Breast epithelium (tissue), 4 donors: ENCODE measurements at regions of chr4 and their contacts with region 1.

Region 1: GRCh38 chr4:118888666-118889311 is at the start of gene SYNPO2:
- DNase-seq: peak; percentile 69 to 88
- H3K4me3 ChIP-seq: peak within 1 kb of the TSS; percentile 38 to 70 (median 56)
- H3K27ac ChIP-seq: peak within 1 kb of the TSS; percentile 55 to 69
- H3K4me1 ChIP-seq: no peaks in the 10 kb centered on the region
- H3K27me3 ChIP-seq: no peaks in the 10 kb centered on the region
- CTCF ChIP-seq: no peak
- POLR2A ChIP-seq: peak; percentile 75
- total RNA-seq, gene SYNPO2: 30.2 to 90.1 (median 52.7) TPM

Region 2: DNA sequence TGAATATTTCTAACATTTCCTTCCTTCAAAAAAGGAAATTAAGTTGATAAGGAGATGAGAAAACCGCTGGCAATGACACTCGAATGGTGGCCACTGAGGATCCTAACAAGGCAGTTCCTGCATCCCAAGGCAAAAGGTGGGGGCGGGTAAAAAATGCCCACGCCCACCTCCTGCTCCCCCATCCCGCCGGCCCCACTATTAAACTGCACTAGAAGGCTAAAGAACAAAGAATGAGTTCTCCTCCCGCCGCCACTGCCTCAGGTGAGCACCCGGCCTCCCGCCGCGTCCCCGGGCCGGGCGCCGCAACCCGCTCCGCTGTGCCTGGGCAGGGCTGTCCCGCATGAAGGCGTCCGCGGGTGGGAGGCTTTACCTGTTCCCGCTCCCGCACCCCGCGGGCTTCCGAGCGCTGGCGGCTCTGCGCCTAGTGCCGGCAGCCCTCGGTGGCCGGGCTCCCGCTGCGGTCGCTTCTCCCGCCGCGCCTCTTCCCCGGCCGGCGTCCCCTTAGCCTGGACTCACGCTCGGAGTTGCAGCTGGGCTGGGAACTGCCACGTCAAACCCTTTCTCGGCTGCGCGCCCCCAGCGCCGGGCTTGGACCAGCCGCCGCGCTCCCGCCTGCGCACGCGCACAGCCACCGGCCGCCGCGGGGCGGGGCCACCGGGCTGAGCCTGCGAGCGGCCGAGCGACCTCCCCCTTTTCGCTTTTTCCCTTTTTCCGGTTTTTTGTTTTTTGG is 53.1 kb before region 1 on chr4 and contains the start of gene SEC24D:
- intact Hi-C with region 1: loop called (anchors 2 kb)
- DNase-seq: peak; percentile 73 to 77
- H3K4me3 ChIP-seq: peak within 1 kb of the TSS; percentile 96 to 99 (median 96)
- H3K27ac ChIP-seq: peak within 1 kb of the TSS; percentile 96 to 99
- H3K4me1 ChIP-seq: no peaks in the 10 kb centered on the region
- H3K27me3 ChIP-seq: no peaks in the 10 kb centered on the region
- CTCF ChIP-seq: peak in 1 of 3 donors; percentile 16
- POLR2A ChIP-seq: no peak
- total RNA-seq, gene SEC24D: 24.5 to 63.6 (median 50.8) TPM

Region 3: GRCh38 chr4:120156120-120156718 is 1267.4 kb after region 1 on chr4:
- intact Hi-C with region 1: no loop called
- DNase-seq: no peak
- H3K4me3 ChIP-seq: no peak overlapping the region
- H3K27ac ChIP-seq: no peak overlapping the region
- H3K4me1 ChIP-seq: no peaks in the 10 kb centered on the region
- H3K27me3 ChIP-seq: no peaks in the 10 kb centered on the region
- CTCF ChIP-seq: peak; percentile 16 to 78 (median 50)
- POLR2A ChIP-seq: no peak